GM10248 (cell line): ENCODE measurements at regions of chr9 and their contacts with region 1.

Region 1: DNA sequence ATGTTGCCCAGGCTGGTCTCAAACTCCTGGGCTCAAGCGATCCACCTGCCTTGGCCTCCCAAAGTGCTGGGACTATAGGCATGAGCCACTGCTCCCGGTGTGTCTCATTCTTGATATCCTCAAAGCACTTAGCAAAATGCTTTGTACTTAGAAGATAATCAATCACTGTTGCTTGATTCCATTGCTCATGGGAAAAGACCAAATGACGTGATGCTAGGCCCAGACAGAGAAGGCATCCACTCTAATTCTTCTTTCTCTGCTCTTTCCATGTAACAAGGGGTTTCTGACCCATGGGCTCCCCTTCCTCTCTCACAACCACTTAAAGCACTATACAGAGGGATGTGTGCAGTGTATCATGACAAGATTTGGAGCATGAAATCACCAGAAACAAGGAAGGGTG is 83.0 kb downstream of the APBA1 start:
- DNase-seq: no peak
- CTCF ChIP-seq: no peak

Region 2: DNA sequence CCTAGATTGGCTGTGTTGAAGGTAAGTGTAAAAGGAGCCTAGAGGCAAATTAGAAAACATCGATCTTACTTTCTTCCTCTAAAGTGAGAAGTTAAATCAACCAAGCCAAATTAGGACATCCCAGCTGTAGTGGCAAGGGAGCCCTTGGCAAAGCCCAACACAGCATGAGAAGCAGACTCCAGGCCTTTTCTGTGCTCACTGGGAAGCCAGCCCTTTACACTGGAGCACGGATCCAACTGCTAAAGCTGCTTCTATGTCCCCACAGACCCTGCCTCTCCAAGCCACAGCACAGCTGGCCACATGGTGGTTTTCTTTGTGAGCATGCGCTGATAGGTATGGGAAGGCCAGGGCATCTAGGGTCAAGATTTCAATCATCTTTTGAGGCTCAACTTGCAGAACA is 11.1 kb before region 1 on chr9:
- CTCF ChIA-PET with region 1: interaction called, 13 read pairs
- POLR2A ChIA-PET with region 1: no interaction called
- DNase-seq: no peak
- CTCF ChIP-seq: no peak